A549 (cell line): ENCODE measurements at regions of chr19 and their contacts with region 1.

Region 1: GRCh38 chr19:47210689-47211316 is 20.2 kb downstream of the BBC3 start:
- DNase-seq: peak; percentile 77 to 85
- ATAC-seq: peak; percentile 61 to 63
- H3K4me3 ChIP-seq: no peak overlapping the region
- H3K27ac ChIP-seq: peak overlapping the region; percentile 76 to 82
- H3K4me1 ChIP-seq: peaks cover 16% of the 10 kb centered on the region
- CTCF ChIP-seq: peak; percentile 92
- EP300 ChIP-seq: no peak
- POLR2A ChIP-seq: no peak
- RAD21 ChIP-seq: peak; percentile 85 to 88

Region 2: GRCh38 chr19:47130591-47131227 is 80.1 kb before region 1 on chr19 and contains the start of gene SAE1:
- CTCF ChIA-PET with region 1: interaction called, 18 read pairs
- POLR2A ChIA-PET with region 1: interaction called, 7 read pairs
- DNase-seq: peak; percentile 100
- ATAC-seq: peak; percentile 91 to 92
- H3K4me3 ChIP-seq: peak within 1 kb of the TSS; percentile 71
- H3K27ac ChIP-seq: peak within 1 kb of the TSS; percentile 92 to 93
- H3K4me1 ChIP-seq: peaks cover 35% of the 10 kb centered on the region
- CTCF ChIP-seq: peak; percentile 50
- EP300 ChIP-seq: no peak
- POLR2A ChIP-seq: peak; percentile 90
- RAD21 ChIP-seq: peak in 1 of 2 experiments; percentile 53; a peak in 2 of 5 replicates
- polyA plus RNA-seq, gene SAE1: 229 and 249 TPM in 2 replicates

Region 3: DNA sequence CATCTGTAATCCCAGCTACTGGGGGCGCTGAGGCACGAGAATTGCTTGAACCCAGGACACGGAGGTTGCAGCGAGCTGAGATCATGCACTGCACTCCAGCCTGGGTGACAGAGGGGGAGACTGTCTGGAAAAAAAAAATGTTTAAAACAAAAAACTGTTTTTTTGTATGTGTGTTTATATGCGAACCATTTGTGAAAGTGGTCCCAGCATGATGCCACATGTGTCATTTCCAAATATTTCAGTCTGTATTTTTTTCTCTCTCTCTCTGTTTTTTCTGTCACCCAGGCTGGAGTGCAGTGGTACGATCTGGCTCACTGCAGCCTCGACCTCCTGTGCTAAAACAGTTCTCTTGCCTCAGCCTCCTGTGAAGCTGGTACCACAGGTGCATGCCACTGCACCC is 42.7 kb before region 1 on chr19:
- CTCF ChIA-PET with region 1: interaction called, 76 read pairs
- POLR2A ChIA-PET with region 1: no interaction called
- DNase-seq: no peak
- ATAC-seq: no peak
- H3K4me3 ChIP-seq: no peak overlapping the region
- H3K27ac ChIP-seq: no peak overlapping the region
- H3K4me1 ChIP-seq: no peaks in the 10 kb centered on the region
- CTCF ChIP-seq: no peak
- EP300 ChIP-seq: no peak
- POLR2A ChIP-seq: no peak
- RAD21 ChIP-seq: no peak

Region 4: DNA sequence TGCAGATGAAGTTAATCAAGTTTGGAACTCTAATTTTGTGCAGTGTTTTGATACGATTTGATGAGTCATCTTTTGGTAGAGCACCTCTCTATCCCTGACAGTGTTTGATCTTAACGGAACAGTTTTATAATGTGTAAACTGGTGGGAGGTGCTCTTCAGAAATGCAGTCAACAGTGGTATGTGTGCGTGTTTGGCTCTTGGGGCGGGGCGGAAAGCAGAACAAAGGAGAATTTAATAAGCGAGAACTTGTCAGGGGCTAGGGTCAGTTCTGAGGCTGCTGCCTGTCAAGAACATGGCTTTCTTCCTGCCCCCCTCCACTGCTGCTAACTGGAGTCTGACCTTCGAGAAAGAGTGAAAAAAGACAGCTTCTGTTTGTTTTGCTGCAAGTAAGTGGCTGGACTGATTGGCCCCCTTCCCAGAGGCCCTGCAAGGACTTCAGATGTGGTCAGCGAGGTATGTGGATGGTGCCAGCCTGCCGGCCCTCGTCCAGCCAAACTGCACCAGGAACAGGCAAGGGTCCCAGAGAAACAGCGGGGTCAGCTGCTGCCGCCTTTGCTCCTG is 20.6 kb before region 1 on chr19:
- CTCF ChIA-PET with region 1: interaction called, 114 read pairs
- POLR2A ChIA-PET with region 1: interaction called, 4 read pairs
- DNase-seq: peak; percentile 65 to 92
- ATAC-seq: peak; percentile 78 to 88
- H3K4me3 ChIP-seq: 0 out of 3 replicates have a peak overlapping the region, but pooled peaks have one; percentile 8
- H3K27ac ChIP-seq: peak overlapping the region; percentile 67 to 79
- H3K4me1 ChIP-seq: peaks cover 38% of the 10 kb centered on the region
- CTCF ChIP-seq: no peak
- EP300 ChIP-seq: peak in 1 of 2 experiments; percentile 68; a peak in 1 of 5 replicates
- POLR2A ChIP-seq: no peak
- RAD21 ChIP-seq: no peak; a peak in 1 of 5 replicates

Region 5: DNA sequence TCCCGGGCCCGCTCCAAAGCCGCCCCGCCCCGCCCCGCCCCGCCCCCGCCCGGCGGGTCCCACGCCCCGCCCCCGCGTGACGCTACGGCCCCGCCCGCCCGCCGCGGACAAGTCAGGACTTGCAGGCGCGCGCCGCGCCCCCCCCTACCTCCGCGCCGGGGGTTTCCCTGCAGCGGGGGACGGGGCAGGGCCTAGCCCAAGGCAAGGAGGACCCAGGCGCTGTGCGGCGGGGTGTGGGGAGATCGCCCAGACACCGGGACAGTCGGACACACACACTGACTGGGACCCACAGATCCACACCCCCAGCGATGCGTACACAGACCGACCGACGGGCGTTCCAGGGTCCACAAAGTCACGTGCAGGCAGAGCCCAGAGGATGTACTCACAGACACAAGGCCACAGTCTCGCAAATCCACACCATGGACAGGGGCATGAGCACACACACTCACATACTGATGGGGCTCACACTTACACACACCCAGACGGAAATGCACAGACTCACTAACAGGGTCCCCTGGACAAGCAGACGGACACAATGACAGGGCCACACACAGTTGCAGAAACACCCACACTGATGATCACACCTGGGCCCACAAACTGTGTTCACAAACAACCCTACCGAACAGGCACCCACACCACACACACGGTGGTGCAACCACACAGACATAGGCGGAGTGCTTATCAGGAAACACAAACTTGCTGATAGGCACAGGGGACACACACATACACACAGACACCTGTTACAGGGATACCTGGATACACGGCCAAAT is 20.6 kb after region 1 on chr19:
- CTCF ChIA-PET with region 1: interaction called, 174 read pairs
- POLR2A ChIA-PET with region 1: interaction called, 87 read pairs
- DNase-seq: peak; percentile 72 to 90
- ATAC-seq: peak; percentile 4 to 7
- H3K4me3 ChIP-seq: peak overlapping the region; percentile 89
- H3K27ac ChIP-seq: peak overlapping the region; percentile 87 to 98
- H3K4me1 ChIP-seq: peaks cover 45% of the 10 kb centered on the region
- CTCF ChIP-seq: no peak
- EP300 ChIP-seq: no peak
- POLR2A ChIP-seq: no peak
- RAD21 ChIP-seq: no peak

Region 6: GRCh38 chr19:47436712-47437401 is 226.1 kb after region 1 on chr19:
- CTCF ChIA-PET with region 1: no interaction called
- POLR2A ChIA-PET with region 1: no interaction called
- DNase-seq: peak; percentile 82 to 86
- ATAC-seq: peak; percentile 84 to 95
- H3K4me3 ChIP-seq: no peak overlapping the region
- H3K27ac ChIP-seq: no peak overlapping the region
- H3K4me1 ChIP-seq: no peaks in the 10 kb centered on the region
- CTCF ChIP-seq: peak; percentile 92
- EP300 ChIP-seq: no peak
- POLR2A ChIP-seq: no peak
- RAD21 ChIP-seq: peak; percentile 96 to 99